OCI-LY7 (cell line): ENCODE measurements at regions of chr1 and their contacts with region 1.

Region 1: DNA sequence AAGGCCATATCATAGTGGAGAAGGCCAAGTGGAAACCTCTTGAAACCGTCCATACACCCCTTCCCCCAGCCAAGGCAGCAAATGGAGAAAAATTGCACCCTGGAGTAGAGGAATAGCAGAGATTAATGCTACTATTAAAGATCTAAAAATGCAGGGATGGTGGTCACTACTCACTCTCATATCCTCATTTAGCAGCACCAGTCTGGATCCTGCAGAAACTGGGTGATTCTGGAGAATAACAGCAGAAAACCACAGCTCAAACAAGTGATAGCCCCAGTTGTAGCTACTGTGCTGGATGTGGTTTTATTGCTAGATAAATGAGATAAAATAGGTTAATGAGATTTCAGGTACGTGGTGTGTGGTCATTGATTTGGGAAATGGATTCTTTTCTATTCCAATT is 30.3 kb downstream of the S1PR1 start:
- DNase-seq: no peak
- H3K4me3 ChIP-seq: no peak overlapping the region
- H3K27ac ChIP-seq: no peak overlapping the region
- H3K4me1 ChIP-seq: no peaks in the 10 kb centered on the region
- CTCF ChIP-seq: no peak

Region 2: DNA sequence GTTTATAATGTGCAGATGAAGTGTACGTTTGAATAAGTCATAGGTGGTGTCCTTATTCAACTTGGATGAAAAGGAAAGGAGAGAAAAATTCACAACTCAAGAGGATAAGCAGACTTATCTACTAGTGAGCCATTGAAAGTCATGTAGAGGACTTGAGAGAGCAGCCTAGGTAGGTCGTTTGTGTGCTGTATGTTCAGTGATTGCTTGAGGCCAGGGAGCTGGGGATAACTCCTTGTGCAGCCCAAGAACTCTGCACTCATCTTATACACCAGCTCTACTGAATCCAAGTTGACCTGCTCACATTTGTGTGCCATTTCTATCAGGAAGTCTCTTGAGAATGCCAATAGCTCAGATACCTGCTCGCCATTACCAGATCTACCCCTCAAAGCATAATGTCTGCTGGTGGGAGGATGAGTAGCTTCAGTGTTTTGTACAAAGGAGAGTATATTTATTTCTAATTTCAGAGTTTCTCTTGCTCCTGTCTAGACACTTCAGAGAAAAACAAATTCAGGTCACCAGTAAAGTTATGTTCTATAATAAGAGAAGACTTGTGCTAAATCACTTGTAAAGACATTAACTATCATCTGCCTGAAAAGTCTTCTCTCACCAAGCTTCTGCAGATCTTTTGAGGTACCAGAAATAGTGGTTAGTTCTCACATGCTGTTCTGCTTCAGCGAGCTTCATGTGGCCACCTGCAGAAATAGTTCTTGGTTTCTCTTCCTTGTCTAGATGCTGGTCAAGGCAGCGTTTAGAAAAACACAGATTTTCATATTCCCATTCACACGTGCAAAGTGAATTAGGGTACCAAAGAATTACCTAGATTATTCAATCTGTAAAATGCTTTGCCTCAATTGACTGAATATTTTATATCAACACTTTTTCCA is 19.4 kb before region 1 on chr1:
- CTCF ChIA-PET with region 1: no interaction called
- POLR2A ChIA-PET with region 1: interaction called, 14 read pairs
- intact Hi-C with region 1: no loop called
- DNase-seq: peak; percentile 95
- H3K4me3 ChIP-seq: peak overlapping the region; percentile 36
- H3K27ac ChIP-seq: peak overlapping the region; percentile 85
- H3K4me1 ChIP-seq: peaks cover 63% of the 10 kb centered on the region
- CTCF ChIP-seq: no peak